Mammary epithelial cell (primary cell): ENCODE measurements at regions of chr2 and their contacts with region 1.

Region 1: GRCh38 chr2:240143801-240144648 is 3.6 kb upstream of the OTOS start:
- DNase-seq: no peak
- H3K4me3 ChIP-seq: no peak overlapping the region
- H3K27ac ChIP-seq: no peak overlapping the region
- H3K4me1 ChIP-seq: no peaks in the 10 kb centered on the region
- H3K27me3 ChIP-seq: no peaks in the 10 kb centered on the region
- CTCF ChIP-seq: peak; percentile 74 to 88

Region 2: GRCh38 chr2:240013343-240013742 is 130.7 kb before region 1 on chr2:
- CTCF ChIA-PET with region 1: no interaction called
- dilution Hi-C with region 1: no loop called
- in situ Hi-C with region 1: no loop called
- intact Hi-C with region 1: no loop called
- DNase-seq: no peak
- H3K4me3 ChIP-seq: no peak overlapping the region
- H3K27ac ChIP-seq: no peak overlapping the region
- H3K4me1 ChIP-seq: no peaks in the 10 kb centered on the region
- H3K27me3 ChIP-seq: no peaks in the 10 kb centered on the region
- CTCF ChIP-seq: peak; percentile 25 to 31

Region 3: DNA sequence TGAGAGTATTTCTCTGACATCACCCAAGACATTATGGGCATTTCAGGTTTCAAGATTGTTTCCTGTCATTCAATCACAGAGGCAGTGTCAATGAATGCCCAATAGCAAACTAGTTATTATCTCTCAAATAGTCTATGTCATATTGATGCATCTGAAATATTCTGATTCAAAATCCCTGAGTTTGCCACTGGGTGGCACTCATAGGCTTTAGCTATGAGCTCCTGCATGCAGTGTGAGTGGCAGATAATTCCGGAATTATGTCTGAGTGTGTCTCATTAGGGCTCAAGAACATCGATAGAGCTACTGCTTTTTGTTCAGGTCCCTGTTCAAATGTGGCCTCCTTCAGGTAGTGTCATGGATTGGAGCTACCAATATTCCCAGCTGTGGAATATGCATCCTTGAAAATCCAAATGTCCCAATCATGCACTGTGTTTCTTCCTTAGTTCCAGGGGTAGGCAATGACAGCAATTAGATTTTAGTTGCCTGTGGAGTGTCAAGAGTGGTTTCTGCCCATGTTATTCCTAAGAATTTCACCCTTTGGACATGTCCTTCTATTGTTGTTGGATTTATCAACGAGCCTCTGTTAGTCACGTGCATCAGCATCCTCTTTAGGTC is 82.9 kb before region 1 on chr2:
- CTCF ChIA-PET with region 1: interaction called, 12 read pairs
- dilution Hi-C with region 1: no loop called
- in situ Hi-C with region 1: loop called (anchors 5 kb)
- intact Hi-C with region 1: loop called (anchors 1 kb)
- DNase-seq: peak; percentile 45
- H3K4me3 ChIP-seq: no peak overlapping the region
- H3K27ac ChIP-seq: no peak overlapping the region
- H3K4me1 ChIP-seq: no peaks in the 10 kb centered on the region
- H3K27me3 ChIP-seq: peaks cover 6% of the 10 kb centered on the region
- CTCF ChIP-seq: peak; percentile 37 to 74